ENCODE measurements at regions of chr3 and their contacts with region 1.

Region 1: GRCh38 chr3:149771652-149772271 is 19.5 kb upstream of the COMMD2 start:
- DNase-seq: peak in 3 of 5 donors; percentile 9 to 20 (median 16)
- H3K4me3 ChIP-seq: no peak overlapping the region
- H3K4me3 Mint-ChIP-seq: no peak overlapping the region
- H3K27ac ChIP-seq: no peak overlapping the region
- H3K27ac Mint-ChIP-seq: peak overlapping the region in 1 of 7 donors; percentile 0
- H3K4me1 ChIP-seq: no peaks in the 10 kb centered on the region
- H3K4me1 Mint-ChIP-seq: no peaks in the 10 kb centered on the region
- H3K27me3 ChIP-seq: no peaks in the 10 kb centered on the region
- H3K27me3 Mint-ChIP-seq: peaks cover 4 to 7% of the 10 kb centered on the region in 2 donors

Region 2: GRCh38 chr3:149512209-149512782 is 259.5 kb before region 1 on chr3:
- CTCF ChIA-PET with region 1: interaction called, 32 read pairs
- POLR2A ChIA-PET with region 1: no interaction called
- intact Hi-C with region 1: no loop called
- DNase-seq: peak in 3 of 5 donors; percentile 7 to 24 (median 8)
- H3K4me3 ChIP-seq: no peak overlapping the region
- H3K4me3 Mint-ChIP-seq: peak overlapping the region in 3 of 8 donors; percentile 25 to 29 (median 27)
- H3K27ac ChIP-seq: no peak overlapping the region
- H3K27ac Mint-ChIP-seq: no peak overlapping the region
- H3K4me1 ChIP-seq: no peaks in the 10 kb centered on the region
- H3K4me1 Mint-ChIP-seq: peaks cover 0 to 10% (median 6%) of the 10 kb centered on the region in 4 donors
- H3K27me3 ChIP-seq: peaks cover 5% of the 10 kb centered on the region
- H3K27me3 Mint-ChIP-seq: peaks cover 2 to 11% of the 10 kb centered on the region in 2 donors

Region 3: DNA sequence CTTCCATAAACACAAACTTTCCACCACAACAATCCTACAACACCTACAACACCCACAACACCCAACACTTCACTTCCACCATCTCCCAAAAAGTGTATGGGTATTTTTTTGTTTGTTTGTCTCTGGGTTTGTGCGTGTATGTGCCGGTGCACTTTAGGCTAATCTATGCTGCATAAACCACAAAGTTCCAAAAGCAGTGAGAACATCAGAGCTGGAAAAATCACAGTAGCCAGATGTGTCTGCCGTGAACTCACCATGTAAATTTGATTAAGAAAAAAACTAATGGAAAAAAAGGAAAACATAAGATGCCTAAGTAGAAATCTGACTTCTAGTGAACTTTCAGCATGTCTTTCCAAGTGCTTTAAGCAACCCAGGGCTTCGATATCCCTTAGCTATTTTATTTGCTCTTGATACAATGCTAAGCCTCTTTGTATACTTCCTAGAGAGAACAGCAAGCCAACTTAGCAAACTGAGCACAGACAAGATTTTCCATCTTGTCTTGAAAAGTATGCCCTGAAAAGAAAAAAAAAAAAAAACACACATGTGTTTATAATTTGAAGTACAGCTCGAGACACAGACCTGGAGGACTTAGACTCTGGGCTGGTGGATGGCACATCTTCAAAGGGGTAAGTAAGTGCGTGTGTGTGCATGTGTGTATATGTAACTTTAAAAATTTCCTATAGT is 205.3 kb before region 1 on chr3:
- CTCF ChIA-PET with region 1: interaction called, 33 read pairs
- POLR2A ChIA-PET with region 1: no interaction called
- intact Hi-C with region 1: no loop called
- DNase-seq: no peak
- H3K4me3 ChIP-seq: no peak overlapping the region
- H3K4me3 Mint-ChIP-seq: no peak overlapping the region
- H3K27ac ChIP-seq: no peak overlapping the region
- H3K27ac Mint-ChIP-seq: no peak overlapping the region
- H3K4me1 ChIP-seq: no peaks in the 10 kb centered on the region
- H3K4me1 Mint-ChIP-seq: peaks cover 0 to 1% (median 0%) of the 10 kb centered on the region in 4 donors
- H3K27me3 ChIP-seq: no peaks in the 10 kb centered on the region
- H3K27me3 Mint-ChIP-seq: peaks cover 0 to 2% of the 10 kb centered on the region in 2 donors

Region 4: GRCh38 chr3:149752051-149752787 is 19.5 kb before region 1 on chr3 and contains the start of gene COMMD2:
- CTCF ChIA-PET with region 1: interaction called, 16 read pairs
- POLR2A ChIA-PET with region 1: interaction called, 3 read pairs
- intact Hi-C with region 1: no loop called
- DNase-seq: peak; percentile 67 to 71 (median 69)
- H3K4me3 ChIP-seq: peak within 1 kb of the TSS; percentile 42 to 85
- H3K4me3 Mint-ChIP-seq: peak within 1 kb of the TSS; percentile 94 to 98 (median 97)
- H3K27ac ChIP-seq: peak within 1 kb of the TSS; percentile 70
- H3K27ac Mint-ChIP-seq: peak within 1 kb of the TSS; percentile 86 to 98 (median 95)
- H3K4me1 ChIP-seq: peaks cover 28% of the 10 kb centered on the region
- H3K4me1 Mint-ChIP-seq: peaks cover 17 to 55% (median 33%) of the 10 kb centered on the region in 4 donors
- H3K27me3 ChIP-seq: no peaks in the 10 kb centered on the region
- H3K27me3 Mint-ChIP-seq: no peaks in the 10 kb centered on the region
- total RNA-seq, gene COMMD2: 38.0 to 44.7 TPM

Region 5: GRCh38 chr3:149792452-149793270 is 20.9 kb after region 1 on chr3 and contains the start of gene ANKUB1:
- CTCF ChIA-PET with region 1: interaction called, 19 read pairs
- POLR2A ChIA-PET with region 1: no interaction called
- intact Hi-C with region 1: no loop called
- DNase-seq: no peak
- H3K4me3 ChIP-seq: no peak within 1 kb of the TSS
- H3K4me3 Mint-ChIP-seq: no peak within 1 kb of the TSS
- H3K27ac ChIP-seq: no peak within 1 kb of the TSS
- H3K27ac Mint-ChIP-seq: no peak within 1 kb of the TSS
- H3K4me1 ChIP-seq: no peaks in the 10 kb centered on the region
- H3K4me1 Mint-ChIP-seq: no peaks in the 10 kb centered on the region
- H3K27me3 ChIP-seq: peaks cover 11% of the 10 kb centered on the region
- H3K27me3 Mint-ChIP-seq: peaks cover 16 to 24% of the 10 kb centered on the region in 2 donors
- total RNA-seq, gene ANKUB1: not detected

Region 6: GRCh38 chr3:149860881-149861280 is 89.1 kb after region 1 on chr3:
- CTCF ChIA-PET with region 1: no interaction called
- POLR2A ChIA-PET with region 1: no interaction called
- intact Hi-C with region 1: no loop called
- DNase-seq: no peak
- H3K4me3 ChIP-seq: no peak overlapping the region
- H3K4me3 Mint-ChIP-seq: no peak overlapping the region
- H3K27ac ChIP-seq: no peak overlapping the region
- H3K27ac Mint-ChIP-seq: no peak overlapping the region
- H3K4me1 ChIP-seq: no peaks in the 10 kb centered on the region
- H3K4me1 Mint-ChIP-seq: peaks cover 12 to 19% (median 13%) of the 10 kb centered on the region in 4 donors
- H3K27me3 ChIP-seq: no peaks in the 10 kb centered on the region
- H3K27me3 Mint-ChIP-seq: no peaks in the 10 kb centered on the region